ENCODE measurements at regions of chr14 and their contacts with region 1.

Region 1: DNA sequence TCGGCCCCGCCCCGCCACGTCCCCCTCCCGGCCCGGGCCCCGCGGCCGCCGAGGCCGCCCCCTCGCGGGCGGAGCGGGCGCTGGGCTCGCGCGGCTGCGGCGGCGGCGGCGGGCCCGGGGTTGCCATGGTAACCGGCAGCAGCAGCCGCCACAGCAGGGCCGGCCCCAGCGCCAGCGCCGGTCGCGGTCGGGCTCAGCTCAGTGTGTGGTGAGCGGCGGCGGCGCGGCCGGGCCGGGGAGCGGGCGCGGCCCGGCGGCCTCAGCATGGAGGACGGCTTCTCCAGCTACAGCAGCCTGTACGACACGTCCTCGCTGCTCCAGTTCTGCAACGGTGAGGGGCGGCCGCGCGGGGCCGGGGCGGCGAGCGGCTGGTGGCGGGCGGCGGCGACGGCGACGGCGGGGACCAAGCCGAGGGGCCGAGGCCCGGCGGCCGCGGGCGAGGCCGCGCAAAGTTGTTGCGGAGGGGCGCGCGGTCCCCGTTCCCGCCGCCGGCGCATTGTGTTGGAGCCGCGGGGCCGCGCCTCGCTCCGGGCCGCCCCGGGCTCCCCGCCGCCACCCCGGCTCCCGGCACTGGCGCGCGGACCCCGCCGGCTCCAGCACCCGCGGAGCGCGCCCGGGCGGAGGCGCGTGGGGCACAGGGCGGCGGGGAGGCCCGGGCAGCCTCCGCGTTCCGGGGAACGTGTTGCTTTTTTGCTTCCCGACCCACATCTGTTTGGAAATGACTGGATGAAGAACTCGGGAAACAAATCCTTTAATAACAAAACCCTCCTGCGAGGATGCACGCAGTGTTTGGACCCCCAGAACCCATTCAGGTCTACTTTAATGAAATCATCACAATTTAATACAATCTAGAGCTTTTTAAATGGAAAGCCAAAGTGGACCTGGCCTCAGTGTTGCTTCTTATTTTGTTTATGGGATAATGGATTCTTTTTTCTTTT is at the start of gene EML1:
- DNase-seq: peak; percentile 93
- ATAC-seq: peak; percentile 93
- total RNA-seq, gene EML1: 49.6 TPM

Region 2: DNA sequence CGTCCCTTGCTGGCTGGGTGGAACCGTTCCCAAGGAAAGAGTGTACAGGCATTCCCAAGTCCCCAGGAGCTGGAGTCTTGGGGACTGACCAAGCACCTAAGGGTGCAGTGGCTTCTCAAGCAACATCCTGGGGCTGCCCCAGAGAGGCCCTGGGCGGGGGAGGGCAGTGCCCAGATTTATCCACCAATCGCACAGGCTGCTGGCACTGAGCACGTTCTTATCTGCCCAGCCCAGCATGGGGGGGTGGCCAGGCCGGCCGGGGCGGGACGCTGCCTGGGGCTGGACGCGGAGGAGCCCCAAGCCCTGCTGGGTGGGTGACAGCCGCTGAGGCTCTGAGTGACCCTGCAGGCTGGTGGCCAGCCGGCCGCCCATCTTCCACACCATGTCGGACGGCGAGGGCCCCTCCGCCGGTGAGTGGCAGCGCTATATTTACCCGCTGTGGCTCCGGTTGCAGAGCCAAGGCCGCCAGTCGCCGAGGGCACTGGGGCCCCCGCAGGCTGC is 56.0 kb before region 1 on chr14:
- intact Hi-C with region 1: loop called (anchors 2 kb)
- DNase-seq: no peak
- ATAC-seq: peak; percentile 84

Region 3: DNA sequence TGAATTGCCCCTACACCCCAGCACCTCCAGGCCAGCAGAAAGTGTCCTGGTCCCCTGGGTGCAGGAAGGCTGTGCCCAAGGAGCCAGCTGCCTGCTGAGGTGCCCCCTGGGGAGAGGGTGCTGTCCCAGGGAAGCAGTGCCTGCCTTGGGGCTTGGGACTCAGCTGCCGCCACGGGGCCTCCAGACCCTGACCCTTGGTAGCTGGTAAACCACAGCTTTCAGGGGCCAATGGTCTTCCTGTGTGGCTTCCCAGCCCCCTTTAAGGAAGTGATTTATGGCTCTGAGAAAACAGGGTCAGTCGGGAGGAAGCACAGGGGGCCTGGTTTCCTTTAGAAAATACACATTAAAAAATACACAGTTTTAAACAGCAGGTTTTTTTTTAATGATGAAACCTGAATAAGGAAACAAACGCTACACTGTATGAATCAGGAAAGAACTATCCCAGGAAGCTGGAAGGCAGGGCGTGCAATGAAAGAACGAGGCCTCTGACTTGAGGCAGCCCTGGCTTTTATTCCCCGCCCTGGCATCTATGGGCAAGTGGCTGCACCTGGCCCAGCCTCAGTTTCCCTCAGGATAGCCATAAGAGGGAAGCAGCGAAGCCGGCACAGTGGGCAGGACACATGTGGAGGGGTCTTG is 40.9 kb before region 1 on chr14:
- intact Hi-C with region 1: loop called (anchors 5 kb)
- DNase-seq: no peak
- ATAC-seq: no peak

Region 4: GRCh38 chr14:99871771-99872170 is 78.3 kb after region 1 on chr14:
- intact Hi-C with region 1: loop called (anchors 1 kb)
- DNase-seq: no peak
- ATAC-seq: no peak

Measured in Right ventricle myocardium inferior (tissue), 1 donor.